ENCODE measurements at regions of chr19 and their contacts with region 1.

Region 1: GRCh38 chr19:18152444-18152816 is 533 bp upstream of the PIK3R2 start:
- DNase-seq: peak; percentile 97 to 98
- H3K4me3 ChIP-seq: peak overlapping the region in 2 of 3 donors; percentile 7 to 84
- H3K27ac ChIP-seq: peak overlapping the region; percentile 89 to 96 (median 90)
- H3K4me1 ChIP-seq: peaks cover 32 to 34% of the 10 kb centered on the region in 2 donors
- H3K27me3 ChIP-seq: no peaks in the 10 kb centered on the region
- CTCF ChIP-seq: peak in 4 of 6 experiments; percentile 44 to 68 (median 62)
- POLR2A ChIP-seq: no peak

Region 2: DNA sequence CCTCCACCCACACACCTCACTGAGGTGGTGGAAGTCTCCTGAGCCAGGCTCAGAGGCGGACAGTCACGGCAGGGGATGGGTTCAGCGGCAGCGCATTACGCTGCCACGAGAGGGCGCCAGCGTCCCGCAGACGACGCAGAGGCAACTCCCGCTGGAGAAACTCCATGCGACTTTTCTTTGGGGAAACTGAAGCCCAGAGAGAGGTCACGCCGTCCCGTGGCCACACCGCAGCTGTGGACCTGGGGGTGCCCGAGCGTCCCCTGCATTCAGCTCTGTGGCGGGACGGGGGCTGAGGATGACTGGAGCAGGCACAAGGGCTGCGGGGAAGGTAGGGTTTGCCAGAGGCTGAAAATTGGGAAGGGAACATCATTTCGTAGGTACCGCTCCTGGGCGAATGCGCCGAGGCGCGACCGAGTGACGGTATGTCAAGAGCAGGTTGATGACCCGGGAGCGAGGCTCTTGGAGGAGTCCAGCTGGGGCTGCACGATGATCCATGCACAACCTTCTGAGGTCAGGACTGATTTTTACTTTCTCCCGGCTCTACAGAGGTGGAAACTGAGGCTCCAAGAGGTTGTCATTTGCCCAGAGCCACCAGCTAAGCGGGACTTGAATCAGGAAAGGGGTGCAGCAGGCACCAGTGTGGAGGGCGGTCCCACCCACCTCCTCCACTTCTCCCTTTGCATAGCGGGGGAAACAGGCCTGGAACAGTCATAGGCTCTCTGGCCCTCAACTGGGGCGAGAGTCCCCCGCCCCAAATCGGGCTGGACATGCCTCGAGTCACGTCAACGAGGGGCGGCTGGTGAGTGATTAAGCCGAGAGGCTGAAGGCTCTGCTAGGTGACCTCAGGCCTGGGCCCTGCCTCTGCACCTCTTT is 145.2 kb before region 1 on chr19:
- intact Hi-C with region 1: loop called (anchors 10 kb)
- DNase-seq: peak; percentile 78 to 84
- H3K4me3 ChIP-seq: peak overlapping the region; percentile 10 to 58 (median 18)
- H3K27ac ChIP-seq: peak overlapping the region; percentile 91 to 93 (median 92)
- H3K4me1 ChIP-seq: peaks cover 0 to 23% of the 10 kb centered on the region in 2 donors
- H3K27me3 ChIP-seq: no peaks in the 10 kb centered on the region
- CTCF ChIP-seq: peak; percentile 90 to 98 (median 96)
- POLR2A ChIP-seq: peak in 1 of 2 donors; percentile 62

Region 3: DNA sequence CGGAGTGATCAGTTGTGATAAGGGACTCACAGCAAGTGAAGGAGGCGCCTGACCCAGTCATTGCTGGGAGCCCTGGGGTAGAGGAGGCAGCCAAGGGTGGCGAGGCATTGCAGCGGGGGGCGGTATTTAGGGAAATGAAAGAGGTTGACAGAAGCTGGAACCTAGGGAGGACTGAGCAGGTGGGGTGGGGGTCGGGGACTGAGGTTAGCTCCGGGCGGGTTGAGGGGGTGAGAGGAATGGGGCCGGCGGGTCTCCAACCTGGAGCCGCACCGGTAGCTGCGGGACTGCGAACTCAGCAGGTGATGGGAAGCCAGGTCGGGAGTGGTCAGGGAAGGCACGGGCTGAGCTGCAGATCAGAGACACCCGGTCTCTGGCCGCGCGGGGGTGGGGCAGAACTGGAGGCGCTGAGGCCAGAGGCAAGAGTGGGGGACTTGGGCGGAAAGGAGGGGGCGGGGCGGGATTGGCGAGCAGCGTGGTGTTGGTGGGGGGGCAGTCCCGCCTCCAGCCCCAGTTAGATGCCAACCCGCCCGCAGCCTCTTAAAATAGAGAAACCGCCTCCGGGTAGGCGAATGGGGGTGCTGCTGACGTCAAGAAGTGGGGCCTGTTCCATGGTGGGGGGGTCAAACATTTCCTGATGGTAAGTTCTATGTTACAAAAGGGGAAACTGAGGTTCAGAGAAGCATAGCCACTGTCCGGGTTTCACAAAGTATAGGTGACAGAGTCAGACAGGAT is 53.4 kb before region 1 on chr19:
- intact Hi-C with region 1: no loop called
- DNase-seq: peak; percentile 22 to 28
- H3K4me3 ChIP-seq: no peak overlapping the region
- H3K27ac ChIP-seq: no peak overlapping the region
- H3K4me1 ChIP-seq: peaks cover 7 to 18% of the 10 kb centered on the region in 2 donors
- H3K27me3 ChIP-seq: no peaks in the 10 kb centered on the region
- CTCF ChIP-seq: no peak
- POLR2A ChIP-seq: no peak

Measured in thyroid gland (tissue), 4 donors.